ENCODE measurements at regions of chr4 and their contacts with region 1.

Region 1: GRCh38 chr4:163332500-163333406 is at the start of gene NPY1R:
- DNase-seq: peak; percentile 78
- ATAC-seq: peak; percentile 78
- H3K4me3 Mint-ChIP-seq: peak within 1 kb of the TSS; percentile 81
- H3K27ac Mint-ChIP-seq: peak within 1 kb of the TSS; percentile 82
- H3K4me1 Mint-ChIP-seq: peaks cover 25% of the 10 kb centered on the region
- H3K27me3 Mint-ChIP-seq: peaks cover 17% of the 10 kb centered on the region
- CTCF ChIP-seq: peak; percentile 31; the same call in 1 of the 2 replicates
- total RNA-seq, gene NPY1R: 18.0 to 21.5 TPM (median 21.3 TPM) in 3 replicates

Region 2: GRCh38 chr4:163048447-163048846 is 284.3 kb before region 1 on chr4:
- CTCF ChIA-PET with region 1: interaction called, 17 read pairs
- POLR2A ChIA-PET with region 1: no interaction called
- DNase-seq: peak; percentile 32
- ATAC-seq: peak; percentile 77
- H3K4me3 Mint-ChIP-seq: no peak overlapping the region
- H3K27ac Mint-ChIP-seq: no peak overlapping the region
- H3K4me1 Mint-ChIP-seq: peaks cover 3% of the 10 kb centered on the region; the same call in 1 of the 2 replicates
- H3K27me3 Mint-ChIP-seq: no peaks in the 10 kb centered on the region
- CTCF ChIP-seq: peak; percentile 40

Region 3: DNA sequence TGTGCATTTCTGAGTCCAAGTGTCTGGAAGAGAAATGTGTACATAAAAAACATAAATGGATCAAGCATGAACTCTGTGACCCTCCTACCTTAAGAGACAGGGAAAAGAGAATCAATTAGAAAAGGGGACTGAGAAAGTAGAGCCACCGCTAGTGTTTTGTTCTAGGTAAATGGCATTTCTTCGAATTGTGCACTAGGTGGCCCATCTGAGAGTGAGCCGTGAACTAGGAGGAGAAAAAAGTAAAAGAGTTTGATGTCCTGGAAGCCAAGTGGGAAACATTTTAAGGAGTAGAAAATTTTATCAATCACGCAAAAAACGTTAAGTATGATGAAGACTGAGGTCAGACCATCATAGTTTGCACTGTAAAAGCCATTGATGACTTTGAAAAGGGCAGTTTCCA is 221.2 kb before region 1 on chr4:
- CTCF ChIA-PET with region 1: interaction called, 32 read pairs
- POLR2A ChIA-PET with region 1: no interaction called
- DNase-seq: no peak
- ATAC-seq: peak; percentile 84
- H3K4me3 Mint-ChIP-seq: no peak overlapping the region
- H3K27ac Mint-ChIP-seq: no peak overlapping the region
- H3K4me1 Mint-ChIP-seq: peaks cover 3% of the 10 kb centered on the region; the same call in 1 of the 2 replicates
- H3K27me3 Mint-ChIP-seq: no peaks in the 10 kb centered on the region
- CTCF ChIP-seq: no peak

Region 4: GRCh38 chr4:163269869-163270268 is 62.9 kb before region 1 on chr4:
- CTCF ChIA-PET with region 1: interaction called, 14 read pairs
- POLR2A ChIA-PET with region 1: no interaction called
- DNase-seq: no peak
- ATAC-seq: peak; percentile 62
- H3K4me3 Mint-ChIP-seq: no peak overlapping the region
- H3K27ac Mint-ChIP-seq: no peak overlapping the region
- H3K4me1 Mint-ChIP-seq: peaks cover 45% of the 10 kb centered on the region
- H3K27me3 Mint-ChIP-seq: peaks cover 5% of the 10 kb centered on the region; the same call in 1 of the 2 replicates
- CTCF ChIP-seq: no peak

Region 5: DNA sequence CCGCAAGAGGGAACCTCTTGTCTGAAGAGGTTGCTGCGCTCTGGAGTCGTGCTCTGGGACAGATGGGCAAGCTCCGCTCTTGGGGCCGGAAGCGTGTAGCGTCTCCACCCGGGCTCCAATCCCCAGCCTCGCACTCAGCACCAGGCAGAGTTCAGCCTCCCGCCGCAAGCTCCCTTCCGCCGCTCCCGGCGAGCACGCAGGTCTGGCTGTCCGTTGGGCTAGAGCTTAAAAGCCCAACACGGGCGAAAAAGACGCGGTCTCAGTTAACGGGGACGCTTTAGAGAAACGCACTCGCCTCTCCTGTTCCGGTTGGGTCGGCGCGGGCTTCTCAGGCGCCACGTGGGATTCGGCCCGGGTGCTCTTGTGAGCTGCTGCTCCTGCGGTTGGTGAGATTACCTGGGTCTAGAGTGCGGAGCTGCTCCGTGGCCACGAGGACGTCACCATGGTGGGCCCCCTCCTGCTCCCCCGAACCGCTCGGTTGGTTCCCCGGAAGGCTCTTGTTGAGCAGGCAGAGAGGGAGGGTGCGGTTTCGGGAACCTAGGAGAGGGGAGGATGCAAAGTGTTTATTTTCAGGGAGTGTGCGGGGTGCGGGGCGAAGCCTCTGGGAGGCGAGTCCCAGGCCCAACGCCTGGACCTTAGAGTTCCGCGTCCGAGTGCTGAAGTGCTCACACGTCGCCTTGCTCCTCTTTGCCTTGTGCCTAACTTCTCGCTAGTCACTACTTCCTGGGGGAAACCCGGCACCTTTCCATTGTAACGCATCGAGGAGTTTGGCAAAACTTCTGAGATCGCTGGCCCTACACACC is 161.8 kb after region 1 on chr4 and contains the start of gene TMA16:
- CTCF ChIA-PET with region 1: interaction called, 4 read pairs
- POLR2A ChIA-PET with region 1: interaction called, 11 read pairs
- DNase-seq: peak; percentile 89
- ATAC-seq: peak; percentile 91
- H3K4me3 Mint-ChIP-seq: peak within 1 kb of the TSS; percentile 91
- H3K27ac Mint-ChIP-seq: peak within 1 kb of the TSS; percentile 100
- H3K4me1 Mint-ChIP-seq: peaks cover 14% of the 10 kb centered on the region
- H3K27me3 Mint-ChIP-seq: no peaks in the 10 kb centered on the region; the same call in 1 of the 2 replicates
- CTCF ChIP-seq: no peak
- total RNA-seq, gene TMA16: 63.7 to 64.9 TPM (median 64.8 TPM) in 3 replicates

Measured in WTC11 (cell line).